Heart right ventricle (tissue), 16 donors: ENCODE measurements at regions of chr1 and their contacts with region 1.

Region 1: DNA sequence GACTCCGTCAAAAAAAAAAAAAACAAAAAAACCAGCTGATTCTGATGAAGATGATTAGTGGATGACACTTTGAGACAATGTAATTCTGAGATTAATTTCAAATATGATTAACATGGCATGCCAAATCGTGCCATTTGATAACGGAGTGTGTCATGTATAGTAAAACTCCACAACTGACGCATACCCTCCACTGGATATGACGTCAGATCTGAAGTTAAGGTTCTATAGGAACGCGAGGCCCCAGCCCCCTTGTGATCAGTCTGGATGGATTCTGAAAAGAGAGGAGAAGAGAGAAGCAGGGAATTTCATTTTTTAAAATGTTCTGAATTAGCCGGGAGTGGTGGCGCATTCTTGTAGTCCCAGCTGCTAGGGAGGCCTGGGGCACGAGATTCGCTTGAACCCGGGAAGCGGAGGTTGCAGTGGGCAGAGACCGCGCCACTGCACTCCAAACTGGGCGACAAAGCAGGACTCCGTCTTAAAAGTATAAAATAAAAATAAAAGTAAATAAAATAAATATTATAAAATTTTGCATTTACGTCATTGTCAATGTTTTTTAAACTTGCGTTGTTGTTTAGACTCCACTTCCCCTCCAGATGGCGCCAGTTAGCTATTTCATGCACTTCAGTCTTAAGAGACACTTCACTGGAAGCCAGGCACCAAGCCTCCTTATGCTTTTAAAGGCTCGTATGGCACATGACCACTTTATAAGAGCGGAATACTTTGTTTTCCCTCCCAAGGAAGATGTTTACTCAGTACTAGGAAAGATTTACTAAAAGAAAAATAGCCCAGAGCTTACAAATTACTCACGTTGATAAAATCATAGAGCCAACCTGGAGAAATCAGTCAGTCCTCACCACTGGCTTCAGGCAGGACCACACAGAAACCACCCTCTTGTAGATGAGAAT is 65.5 kb downstream of the UBE2U start:
- DNase-seq: peak in 1 of 2 donors; percentile 82
- ATAC-seq: peak; percentile 59 to 81 (median 74)
- H3K4me3 ChIP-seq: no peak overlapping the region
- H3K27ac ChIP-seq: no peak overlapping the region
- H3K4me1 ChIP-seq: peaks cover 0 to 7% (median 0%) of the 10 kb centered on the region in 9 donors
- H3K27me3 ChIP-seq: peaks cover 0 to 11% (median 0%) of the 10 kb centered on the region in 7 donors
- CTCF ChIP-seq: peak; percentile 69 to 91 (median 82)

Region 2: GRCh38 chr1:64136752-64137411 is 132.0 kb before region 1 on chr1:
- intact Hi-C with region 1: no loop called
- DNase-seq: peak; percentile 43 to 81
- ATAC-seq: peak; percentile 76 to 91 (median 88)
- H3K4me3 ChIP-seq: no peak overlapping the region
- H3K27ac ChIP-seq: peak overlapping the region in 4 of 10 donors; percentile 23 to 59 (median 32)
- H3K4me1 ChIP-seq: peaks cover 0 to 14% (median 3%) of the 10 kb centered on the region in 9 donors
- H3K27me3 ChIP-seq: no peaks in the 10 kb centered on the region
- CTCF ChIP-seq: peak; percentile 68 to 89 (median 84)

Region 3: DNA sequence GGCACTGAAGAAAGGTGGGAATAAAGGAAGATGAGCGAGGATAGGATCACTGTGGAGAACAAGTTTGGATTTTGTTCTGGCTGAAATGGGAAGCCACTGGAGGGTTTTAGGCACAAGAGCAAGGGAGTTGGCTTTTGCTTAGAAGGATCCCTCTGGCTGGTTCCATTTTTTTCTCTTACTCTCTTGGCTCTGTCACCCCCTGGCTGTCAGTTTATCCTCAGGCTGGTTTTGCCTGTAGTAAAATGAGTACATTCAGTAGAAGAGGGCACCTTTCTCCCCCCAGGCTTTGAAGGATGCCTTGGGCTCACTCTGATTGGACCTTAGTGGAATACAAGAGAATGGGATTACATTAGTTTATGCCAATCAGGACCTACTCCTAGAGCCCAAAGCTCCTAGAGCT is 218.2 kb after region 1 on chr1:
- intact Hi-C with region 1: loop called in 4 of 10 experiments (anchors 10 kb)
- DNase-seq: no peak
- ATAC-seq: no peak
- H3K4me3 ChIP-seq: no peak overlapping the region
- H3K27ac ChIP-seq: no peak overlapping the region
- H3K4me1 ChIP-seq: peaks cover 0 to 20% (median 1%) of the 10 kb centered on the region in 9 donors
- H3K27me3 ChIP-seq: no peaks in the 10 kb centered on the region
- CTCF ChIP-seq: peak in 3 of 9 donors; percentile 17 to 21 (median 20)

Region 4: GRCh38 chr1:64686828-64687724 is 418.2 kb after region 1 on chr1:
- intact Hi-C with region 1: loop called in 2 of 10 experiments (anchors 5 kb)
- DNase-seq: peak in 1 of 2 donors; percentile 19
- ATAC-seq: peak in 7 of 8 donors; percentile 41 to 82 (median 74)
- H3K4me3 ChIP-seq: no peak overlapping the region
- H3K27ac ChIP-seq: peak overlapping the region in 1 of 10 donors; percentile 34
- H3K4me1 ChIP-seq: peaks cover 0 to 23% (median 5%) of the 10 kb centered on the region in 9 donors
- H3K27me3 ChIP-seq: no peaks in the 10 kb centered on the region
- CTCF ChIP-seq: peak; percentile 63 to 92 (median 85)